Breast epithelium (tissue), 4 donors: ENCODE measurements at regions of chr2 and their contacts with region 1.

Region 1: DNA sequence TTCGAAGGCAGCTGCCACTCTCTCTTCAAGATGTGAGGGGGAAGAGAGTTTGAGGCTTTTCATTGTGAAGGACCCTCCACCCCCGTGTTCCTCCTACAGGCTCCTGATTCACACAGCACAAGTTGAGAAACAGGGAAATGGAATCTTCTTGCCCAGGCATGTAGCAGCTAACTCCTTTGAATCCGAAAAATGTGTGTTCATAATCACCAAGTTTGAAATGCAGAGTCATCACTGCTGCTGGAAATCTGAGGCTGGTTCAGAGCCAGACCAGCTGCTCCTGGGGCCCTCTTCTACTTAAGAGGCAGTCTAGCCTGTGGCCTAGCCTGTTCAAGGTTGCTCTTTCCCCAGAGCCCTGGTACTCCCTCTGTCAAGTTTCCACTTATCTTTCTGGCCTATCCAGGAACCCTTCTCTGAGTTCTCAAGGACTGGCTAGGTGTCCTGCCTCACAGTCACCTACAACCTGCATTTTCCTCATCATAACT is 166.4 kb downstream of the TMEM247 start:
- DNase-seq: peak in 1 of 2 donors; percentile 70
- H3K4me3 ChIP-seq: no peak overlapping the region
- H3K27ac ChIP-seq: peak overlapping the region; percentile 55 to 60
- H3K4me1 ChIP-seq: peaks cover 0 to 5% of the 10 kb centered on the region in 2 donors
- H3K27me3 ChIP-seq: no peaks in the 10 kb centered on the region
- CTCF ChIP-seq: no peak
- POLR2A ChIP-seq: no peak

Region 2: DNA sequence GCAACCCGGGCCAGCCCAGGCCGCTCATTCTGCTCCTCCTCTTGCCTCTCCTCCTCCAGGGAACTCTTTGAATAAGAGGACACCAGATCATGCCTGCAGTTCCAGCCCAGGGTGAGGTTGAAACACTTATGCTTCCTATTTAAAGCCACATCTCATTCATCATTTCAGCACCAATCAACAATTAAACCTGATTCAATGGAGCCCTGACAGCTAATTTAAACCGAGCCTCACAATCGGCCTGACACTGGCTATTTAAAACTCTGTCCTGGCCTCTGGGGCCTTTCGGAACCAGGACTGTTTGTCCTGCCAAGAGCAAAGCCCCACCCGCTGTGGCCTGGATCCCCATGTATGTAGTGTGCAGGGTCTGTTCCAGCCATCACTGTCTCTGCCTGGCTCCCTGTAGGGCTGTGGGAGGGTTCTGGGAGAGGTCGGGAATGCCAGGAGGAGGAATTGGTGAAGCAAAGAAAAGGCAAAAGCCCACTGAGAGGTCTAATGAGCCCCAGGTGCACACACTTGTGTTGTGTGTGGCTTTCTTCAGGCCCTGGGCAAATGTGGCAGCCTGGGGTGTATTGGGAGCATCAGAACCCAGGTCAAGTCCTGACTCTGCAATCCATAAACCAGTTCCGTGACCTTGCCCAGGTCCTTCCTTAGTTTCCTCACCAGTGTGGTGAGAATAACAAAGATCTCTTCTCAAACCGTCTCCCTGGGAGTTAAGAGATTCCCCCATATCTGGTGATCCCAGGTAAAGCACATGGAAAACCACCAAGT is 172.6 kb after region 1 on chr2:
- intact Hi-C with region 1: no loop called
- DNase-seq: peak in 1 of 2 donors; percentile 56
- H3K4me3 ChIP-seq: no peak overlapping the region
- H3K27ac ChIP-seq: peak overlapping the region; percentile 23 to 74
- H3K4me1 ChIP-seq: peaks cover 17 to 28% of the 10 kb centered on the region in 2 donors
- H3K27me3 ChIP-seq: no peaks in the 10 kb centered on the region
- CTCF ChIP-seq: no peak
- POLR2A ChIP-seq: no peak

Region 3: DNA sequence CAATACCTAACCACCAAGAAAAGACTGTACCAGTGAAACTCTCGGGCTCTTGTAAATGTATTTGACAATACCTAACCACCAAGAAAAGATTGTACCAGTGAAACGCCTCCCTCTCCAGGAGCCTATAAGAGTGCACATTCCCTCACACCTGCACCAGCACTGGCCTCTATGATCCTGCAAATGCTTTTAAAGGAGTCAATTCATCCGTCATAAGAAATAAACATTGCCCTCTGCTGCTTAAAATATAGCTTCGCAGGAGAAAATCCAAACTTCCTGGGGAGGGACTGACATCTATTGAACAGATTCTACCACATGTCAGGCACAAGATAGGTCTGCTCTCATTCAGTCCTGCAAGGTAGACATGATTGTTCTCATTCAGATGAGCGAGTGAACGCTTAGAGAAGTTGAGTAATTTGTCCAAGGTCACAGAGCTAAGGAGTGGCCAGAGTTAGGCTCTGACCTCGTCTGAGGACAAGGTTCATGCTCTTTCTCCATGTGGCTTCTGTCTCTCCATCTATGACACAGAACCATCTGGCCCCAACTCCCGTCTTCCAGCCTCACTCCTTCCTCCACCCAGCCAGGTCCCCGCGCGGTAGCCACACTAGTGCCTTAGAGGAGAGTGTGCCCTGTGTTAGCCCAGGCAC is 231.1 kb after region 1 on chr2:
- intact Hi-C with region 1: loop called (anchors 10 kb)
- DNase-seq: no peak
- H3K4me3 ChIP-seq: no peak overlapping the region
- H3K27ac ChIP-seq: peak overlapping the region in 1 of 2 donors; percentile 61
- H3K4me1 ChIP-seq: peaks cover 0 to 10% of the 10 kb centered on the region in 2 donors
- H3K27me3 ChIP-seq: no peaks in the 10 kb centered on the region
- CTCF ChIP-seq: peak; percentile 28 to 75 (median 56)
- POLR2A ChIP-seq: no peak